Right lobe of liver (tissue), 6 donors: ENCODE measurements at regions of chr19 and their contacts with region 1.

Region 1: GRCh38 chr19:49665351-49666119 is at the starts of genes BCL2L12 and IRF3:
- DNase-seq: peak; percentile 98 to 99 (median 98)
- ATAC-seq: peak; percentile 82 to 90 (median 84)
- H3K4me3 ChIP-seq: peak within 1 kb of the TSS; percentile 59 to 79 (median 68)
- H3K27ac ChIP-seq: peak within 1 kb of the TSS; percentile 54 to 82 (median 67)
- H3K4me1 ChIP-seq: peaks cover 0 to 14% (median 5%) of the 10 kb centered on the region in 4 donors
- H3K27me3 ChIP-seq: no peaks in the 10 kb centered on the region
- CTCF ChIP-seq: no peak
- POLR2A ChIP-seq: peak; percentile 80
- total RNA-seq, gene BCL2L12: 4.5 to 11.6 (median 10.5) TPM
- total RNA-seq, gene IRF3: 29.6 to 41.8 (median 35.3) TPM

Region 2: GRCh38 chr19:49590071-49590970 is 75.2 kb before region 1 on chr19:
- intact Hi-C with region 1: loop called in 1 of 2 experiments (anchors 10 kb)
- DNase-seq: peak; percentile 97 to 98 (median 98)
- ATAC-seq: peak; percentile 89 to 94 (median 91)
- H3K4me3 ChIP-seq: peak overlapping the region; percentile 76 to 83 (median 77)
- H3K27ac ChIP-seq: peak overlapping the region; percentile 39 to 84 (median 82)
- H3K4me1 ChIP-seq: peaks cover 0 to 4% (median 0%) of the 10 kb centered on the region in 4 donors
- H3K27me3 ChIP-seq: no peaks in the 10 kb centered on the region
- CTCF ChIP-seq: peak in 1 of 4 donors; percentile 2
- POLR2A ChIP-seq: peak; percentile 80

Region 3: GRCh38 chr19:49615861-49616260 is 49.7 kb before region 1 on chr19:
- intact Hi-C with region 1: no loop called
- DNase-seq: no peak
- ATAC-seq: no peak
- H3K4me3 ChIP-seq: no peak overlapping the region
- H3K27ac ChIP-seq: no peak overlapping the region
- H3K4me1 ChIP-seq: no peaks in the 10 kb centered on the region
- H3K27me3 ChIP-seq: no peaks in the 10 kb centered on the region
- CTCF ChIP-seq: no peak
- POLR2A ChIP-seq: no peak